SK-N-SH (cell line): ENCODE measurements at regions of chr10 and their contacts with region 1.

Region 1: GRCh38 chr10:11255796-11256444 is 238.2 kb downstream of the CELF2 start:
- DNase-seq: no peak
- H3K4me3 ChIP-seq: no peak overlapping the region
- H3K27ac ChIP-seq: no peak overlapping the region
- H3K4me1 ChIP-seq: no peaks in the 10 kb centered on the region; a peak in 1 of 4 replicates
- H3K27me3 ChIP-seq: no peaks in the 10 kb centered on the region
- CTCF ChIP-seq: no peak
- EP300 ChIP-seq: no peak
- RAD21 ChIP-seq: no peak

Region 2: GRCh38 chr10:10959666-10960065 is 296.3 kb before region 1 on chr10:
- CTCF ChIA-PET with region 1: no interaction called
- POLR2A ChIA-PET with region 1: no interaction called
- DNase-seq: no peak
- H3K4me3 ChIP-seq: no peak overlapping the region
- H3K27ac ChIP-seq: no peak overlapping the region
- H3K4me1 ChIP-seq: no peaks in the 10 kb centered on the region
- H3K27me3 ChIP-seq: no peaks in the 10 kb centered on the region
- CTCF ChIP-seq: no peak
- EP300 ChIP-seq: no peak
- RAD21 ChIP-seq: no peak

Region 3: DNA sequence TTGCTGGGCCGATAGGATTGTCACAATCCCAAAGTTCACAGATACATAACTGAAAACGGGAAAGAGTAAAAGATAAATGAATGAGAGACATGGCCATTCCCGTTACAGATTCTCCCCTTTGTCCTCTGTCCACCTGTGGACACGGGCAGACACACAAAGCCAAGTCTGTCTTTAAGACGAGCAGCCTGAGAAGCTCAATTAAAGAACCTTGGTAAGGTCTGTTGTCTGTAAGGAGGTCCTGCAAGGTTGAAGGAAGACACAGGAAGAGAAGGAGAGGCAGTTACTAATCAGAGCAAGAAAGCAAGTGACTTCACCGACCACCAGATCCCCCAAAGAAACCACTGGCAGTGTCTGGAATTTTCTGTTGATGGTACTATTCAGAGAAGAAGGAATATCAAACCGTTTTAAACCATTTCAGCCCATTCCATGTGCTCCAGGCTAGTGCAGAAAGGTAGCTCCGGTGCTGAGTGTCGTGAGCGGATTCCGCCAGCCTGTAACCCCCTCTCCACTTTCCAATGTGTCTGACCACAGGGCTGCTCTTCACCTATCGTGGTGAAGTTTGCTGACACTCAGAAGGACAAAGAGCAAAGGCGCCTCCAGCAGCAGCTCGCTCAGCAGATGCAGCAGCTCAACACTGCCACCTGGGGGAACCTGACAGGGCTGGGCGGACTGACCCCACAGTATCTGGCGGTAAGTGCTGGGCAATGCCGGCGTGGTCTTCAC is 14.4 kb after region 1 on chr10:
- CTCF ChIA-PET with region 1: interaction called, 16 read pairs
- POLR2A ChIA-PET with region 1: no interaction called
- DNase-seq: peak; percentile 77
- H3K4me3 ChIP-seq: peak overlapping the region in 1 of 2 experiments; percentile 26; a peak in 1 of 4 replicates
- H3K27ac ChIP-seq: no peak overlapping the region
- H3K4me1 ChIP-seq: no peaks in the 10 kb centered on the region; a peak in 1 of 4 replicates
- H3K27me3 ChIP-seq: no peaks in the 10 kb centered on the region
- CTCF ChIP-seq: peak; percentile 41
- EP300 ChIP-seq: no peak
- RAD21 ChIP-seq: peak; percentile 90